ENCODE measurements at regions of chr18 and their contacts with region 1.

Region 1: DNA sequence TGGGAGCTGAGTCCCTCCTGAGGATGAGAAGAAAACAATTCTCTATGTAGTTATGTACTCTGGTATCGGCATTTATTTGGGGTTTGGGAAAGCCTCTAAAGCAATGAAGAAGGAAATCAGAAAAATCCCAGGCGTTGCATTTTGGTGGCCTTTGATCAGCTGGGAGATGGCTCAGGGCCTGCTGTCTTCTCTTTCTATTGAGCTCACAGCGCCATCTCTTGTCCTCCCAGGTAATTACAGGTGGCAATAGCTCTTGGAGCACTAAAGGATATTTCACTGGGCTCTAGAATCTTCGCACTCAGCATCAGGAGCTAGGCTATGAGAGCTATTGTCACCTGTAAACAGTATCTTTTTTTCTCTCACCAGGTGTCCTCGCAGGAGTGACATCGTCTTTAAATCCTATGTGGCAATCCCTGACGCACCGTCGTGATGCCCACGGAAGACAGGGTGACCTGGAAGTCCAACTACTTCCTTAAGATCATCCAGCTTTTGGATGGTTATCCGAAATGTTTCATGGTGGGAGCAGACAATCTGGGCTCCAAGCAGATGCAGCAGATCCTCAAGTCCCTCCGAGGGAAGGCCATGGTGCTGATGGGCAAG is 76.1 kb upstream of the PMAIP1 start:
- DNase-seq: peak; percentile 92
- ATAC-seq: peak; percentile 92
- H3K4me3 ChIP-seq: no peak overlapping the region
- H3K27ac ChIP-seq: no peak overlapping the region
- H3K4me1 ChIP-seq: peaks cover 4% of the 10 kb centered on the region
- H3K27me3 ChIP-seq: no peaks in the 10 kb centered on the region
- CTCF ChIP-seq: peak; percentile 92

Region 2: DNA sequence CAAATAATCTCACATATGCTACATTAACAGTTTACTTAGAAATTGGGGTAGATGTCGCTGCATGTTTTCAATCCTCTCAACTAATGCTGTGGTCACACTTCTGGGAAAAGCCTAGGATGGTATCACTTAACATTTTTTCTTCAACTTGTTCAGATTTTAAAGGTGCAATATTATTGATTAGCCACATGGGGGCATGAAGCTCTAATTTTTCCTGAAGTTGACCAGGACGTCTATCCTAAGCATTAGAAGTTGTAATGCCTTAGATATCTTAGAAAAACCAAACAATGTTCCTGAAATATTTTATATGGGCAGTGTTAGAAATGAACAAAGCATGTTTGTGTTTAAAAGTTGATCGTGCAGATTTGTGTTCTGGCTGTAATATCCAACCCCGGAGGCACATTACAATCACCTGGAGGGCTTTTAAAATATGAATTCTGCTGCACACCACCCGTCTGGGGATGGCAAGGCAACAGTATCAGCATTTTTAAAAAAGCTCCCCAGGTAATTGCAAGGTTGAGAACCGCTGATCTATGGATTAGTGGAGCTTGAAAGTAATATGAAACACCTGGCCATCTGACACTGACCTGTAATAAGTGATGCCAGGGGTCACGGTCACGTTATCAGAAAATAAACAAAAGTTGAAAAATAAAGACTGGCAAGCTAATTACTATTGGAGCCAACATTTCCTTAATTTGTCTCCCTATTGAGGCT is 364.2 kb before region 1 on chr18:
- CTCF ChIA-PET with region 1: interaction called, 28 read pairs
- POLR2A ChIA-PET with region 1: no interaction called
- intact Hi-C with region 1: loop called (anchors 1 kb)
- DNase-seq: peak; percentile 43
- ATAC-seq: peak; percentile 58
- H3K4me3 ChIP-seq: no peak overlapping the region
- H3K27ac ChIP-seq: no peak overlapping the region
- H3K4me1 ChIP-seq: no peaks in the 10 kb centered on the region
- H3K27me3 ChIP-seq: no peaks in the 10 kb centered on the region
- CTCF ChIP-seq: peak; percentile 77

Region 3: GRCh38 chr18:59742325-59743111 is 81.2 kb before region 1 on chr18:
- CTCF ChIA-PET with region 1: no interaction called
- POLR2A ChIA-PET with region 1: no interaction called
- intact Hi-C with region 1: no loop called
- DNase-seq: peak; percentile 24
- ATAC-seq: no peak
- H3K4me3 ChIP-seq: no peak overlapping the region
- H3K27ac ChIP-seq: no peak overlapping the region
- H3K4me1 ChIP-seq: peaks cover 30% of the 10 kb centered on the region
- H3K27me3 ChIP-seq: no peaks in the 10 kb centered on the region
- CTCF ChIP-seq: no peak

Measured in PC-3 (cell line).